K562 (cell line): ENCODE measurements at regions of chr12 and their contacts with region 1.

Region 1: GRCh38 chr12:48988030-48988649 is 10.0 kb downstream of the WNT1 start:
- DNase-seq: peak; percentile 77 to 80 (median 80)
- ATAC-seq: peak; percentile 93
- H3K4me3 ChIP-seq: no peak overlapping the region
- H3K27ac ChIP-seq: no peak overlapping the region
- H3K4me1 ChIP-seq: peaks cover 2 to 3% of the 10 kb centered on the region in 2 experiments; a peak in 2 of 5 replicates
- H3K27me3 ChIP-seq: peaks cover 10 to 45% of the 10 kb centered on the region in 2 experiments; a peak in 4 of 5 replicates
- CTCF ChIP-seq: peak; percentile 81 to 98 (median 85)
- EP300 ChIP-seq: no peak
- POLR2A ChIP-seq: no peak
- RAD21 ChIP-seq: peak in 1 of 2 experiments; percentile 55; a peak in 2 of 4 replicates

Region 2: DNA sequence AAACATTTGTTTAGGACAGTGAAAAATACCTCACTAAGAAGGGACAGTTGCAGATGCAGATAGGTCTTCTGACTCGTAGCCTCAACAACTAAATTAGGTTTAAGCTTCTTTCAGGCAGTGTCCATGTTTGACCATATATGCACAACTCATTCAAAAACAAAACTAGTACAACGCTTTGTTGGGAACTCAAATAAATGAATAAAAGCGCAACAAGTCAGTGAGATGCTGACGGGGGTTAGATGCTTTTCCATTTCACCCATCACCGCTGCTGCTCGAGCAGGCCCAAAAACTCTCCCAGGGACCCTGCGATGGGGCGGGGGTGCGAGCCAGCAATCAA is 1282.9 kb before region 1 on chr12:
- CTCF ChIA-PET with region 1: no interaction called
- POLR2A ChIA-PET with region 1: no interaction called
- in situ Hi-C with region 1: no loop called
- intact Hi-C with region 1: no loop called
- DNase-seq: no peak
- ATAC-seq: no peak
- H3K4me3 ChIP-seq: peak overlapping the region; percentile 83
- H3K27ac ChIP-seq: peak overlapping the region; percentile 93
- H3K4me1 ChIP-seq: peaks cover 9 to 36% of the 10 kb centered on the region in 2 experiments
- H3K27me3 ChIP-seq: no peaks in the 10 kb centered on the region
- CTCF ChIP-seq: no peak
- EP300 ChIP-seq: no peak
- POLR2A ChIP-seq: no peak
- RAD21 ChIP-seq: no peak

Region 3: GRCh38 chr12:48758221-48758620 is 229.9 kb before region 1 on chr12:
- CTCF ChIA-PET with region 1: no interaction called
- POLR2A ChIA-PET with region 1: no interaction called
- in situ Hi-C with region 1: no loop called
- intact Hi-C with region 1: loop called (anchors 10 kb)
- DNase-seq: no peak
- ATAC-seq: peak; percentile 83
- H3K4me3 ChIP-seq: no peak overlapping the region
- H3K27ac ChIP-seq: no peak overlapping the region
- H3K4me1 ChIP-seq: no peaks in the 10 kb centered on the region
- H3K27me3 ChIP-seq: peaks cover 0 to 2% of the 10 kb centered on the region in 2 experiments; a peak in 4 of 5 replicates
- CTCF ChIP-seq: peak; percentile 21 to 39 (median 22); a peak in 2 of 6 replicates
- EP300 ChIP-seq: no peak
- POLR2A ChIP-seq: no peak
- RAD21 ChIP-seq: peak in 1 of 2 experiments; percentile 40; a peak in 1 of 4 replicates

Region 4: GRCh38 chr12:48936379-48936979 is 51.7 kb before region 1 on chr12:
- CTCF ChIA-PET with region 1: no interaction called
- POLR2A ChIA-PET with region 1: interaction called, 5 read pairs
- in situ Hi-C with region 1: no loop called
- intact Hi-C with region 1: loop called (anchors 5 kb)
- DNase-seq: peak; percentile 78 to 87 (median 84)
- ATAC-seq: peak; percentile 95
- H3K4me3 ChIP-seq: no peak overlapping the region
- H3K27ac ChIP-seq: no peak overlapping the region
- H3K4me1 ChIP-seq: no peaks in the 10 kb centered on the region; a peak in 1 of 5 replicates
- H3K27me3 ChIP-seq: no peaks in the 10 kb centered on the region
- CTCF ChIP-seq: peak; percentile 81 to 93 (median 84)
- EP300 ChIP-seq: no peak
- POLR2A ChIP-seq: no peak
- RAD21 ChIP-seq: peak; percentile 28 to 67

Region 5: GRCh38 chr12:48957141-48958048 is 30.7 kb before region 1 on chr12 and contains the start of gene ARF3:
- CTCF ChIA-PET with region 1: no interaction called
- POLR2A ChIA-PET with region 1: no interaction called
- in situ Hi-C with region 1: no loop called
- intact Hi-C with region 1: no loop called
- DNase-seq: peak; percentile 96 to 97 (median 97)
- ATAC-seq: peak; percentile 94
- H3K4me3 ChIP-seq: peak within 1 kb of the TSS; percentile 89
- H3K27ac ChIP-seq: peak within 1 kb of the TSS; percentile 71
- H3K4me1 ChIP-seq: peaks cover 9 to 20% of the 10 kb centered on the region in 2 experiments; a peak in 4 of 5 replicates
- H3K27me3 ChIP-seq: no peaks in the 10 kb centered on the region
- CTCF ChIP-seq: peak in 2 of 3 experiments; percentile 4 to 48; a peak in 2 of 6 replicates
- EP300 ChIP-seq: no peak
- POLR2A ChIP-seq: peak; percentile 85
- RAD21 ChIP-seq: no peak
- polyA plus RNA-seq, gene ARF3: 5.9 to 7.4 TPM